Right ventricle myocardium inferior (tissue), 1 donor: ENCODE measurements at regions of chr2 and their contacts with region 1.

Region 1: GRCh38 chr2:42095923-42096408 is 48.1 kb downstream of the PKDCC start:
- DNase-seq: peak; percentile 89
- ATAC-seq: peak; percentile 36

Region 2: DNA sequence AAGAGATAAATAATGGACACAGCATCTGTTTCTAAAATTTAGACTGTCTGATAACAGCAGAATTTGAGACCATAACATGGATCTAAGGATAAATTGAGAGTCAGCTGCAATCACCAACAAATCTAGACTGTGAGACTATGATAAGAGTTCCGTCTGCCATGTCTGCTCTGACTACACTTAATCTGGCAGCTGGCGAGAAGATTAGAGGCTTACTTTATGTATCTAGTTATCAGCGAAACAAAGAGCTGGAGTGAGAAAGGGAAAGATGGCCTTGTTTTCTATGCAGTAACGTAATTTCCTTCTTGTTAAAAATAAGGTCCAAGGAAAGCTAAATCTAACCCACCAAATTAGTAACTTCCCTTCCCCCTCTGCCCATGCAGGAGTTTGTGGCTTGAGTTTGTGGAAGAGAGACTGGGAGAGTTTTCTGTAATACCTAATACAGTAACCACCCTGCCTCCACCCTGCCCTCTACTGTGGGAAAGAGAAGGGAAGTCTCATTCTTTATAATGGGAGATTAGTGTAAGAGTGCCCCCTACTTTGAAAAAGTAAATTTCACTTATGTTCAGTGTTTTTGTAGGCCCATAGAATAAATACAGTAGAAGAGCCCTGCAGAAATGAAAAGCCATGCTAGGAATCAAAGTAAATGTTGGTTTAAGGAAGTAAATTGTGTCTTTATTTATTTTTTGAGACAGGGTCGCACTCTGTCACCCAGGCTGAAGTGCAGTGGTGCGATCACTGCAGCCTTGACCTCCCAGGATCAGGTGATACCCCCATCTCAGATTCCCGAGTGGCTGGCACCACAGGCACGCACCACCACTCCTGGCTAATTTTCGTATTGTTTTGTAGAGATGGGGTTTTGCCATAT is 100.7 kb after region 1 on chr2:
- intact Hi-C with region 1: loop called (anchors 2 kb)
- DNase-seq: peak; percentile 45
- ATAC-seq: peak; percentile 59

Region 3: GRCh38 chr2:42238644-42239288 is 142.8 kb after region 1 on chr2:
- intact Hi-C with region 1: loop called (anchors 1 kb)
- DNase-seq: peak; percentile 60
- ATAC-seq: peak; percentile 89

Region 4: DNA sequence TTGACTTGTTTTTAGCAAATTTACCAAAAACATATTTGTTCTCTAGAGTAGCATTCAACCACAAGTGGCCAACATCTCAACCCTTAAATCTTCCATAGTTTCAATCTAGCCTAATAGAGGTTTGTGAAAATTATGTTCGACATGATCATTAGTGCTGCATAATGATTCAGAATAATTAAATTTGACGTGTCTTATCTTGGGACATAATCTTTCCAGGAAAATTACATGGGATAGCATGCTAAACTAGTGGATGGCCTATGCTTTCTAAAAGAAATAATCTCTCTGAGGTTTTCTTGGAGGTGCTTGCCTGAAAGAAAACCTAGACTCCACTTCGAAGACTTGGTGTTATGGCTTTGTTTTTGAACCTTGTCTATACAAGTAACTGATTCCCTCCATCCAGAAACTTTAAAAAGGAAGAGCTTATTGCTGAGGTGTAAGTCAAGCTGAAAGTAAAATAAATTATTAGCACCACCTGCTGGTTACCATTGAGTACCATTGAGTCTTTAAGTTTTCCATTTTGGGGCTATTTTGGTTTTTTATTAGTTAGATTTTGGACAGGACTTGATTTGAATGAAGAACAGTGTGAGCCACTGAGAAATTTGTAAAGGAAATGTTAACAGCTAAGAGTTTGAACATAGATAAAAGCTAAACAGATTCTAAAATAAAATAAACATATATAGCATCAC is 232.3 kb after region 1 on chr2:
- intact Hi-C with region 1: loop called (anchors 2 kb)
- DNase-seq: no peak
- ATAC-seq: no peak

Region 5: DNA sequence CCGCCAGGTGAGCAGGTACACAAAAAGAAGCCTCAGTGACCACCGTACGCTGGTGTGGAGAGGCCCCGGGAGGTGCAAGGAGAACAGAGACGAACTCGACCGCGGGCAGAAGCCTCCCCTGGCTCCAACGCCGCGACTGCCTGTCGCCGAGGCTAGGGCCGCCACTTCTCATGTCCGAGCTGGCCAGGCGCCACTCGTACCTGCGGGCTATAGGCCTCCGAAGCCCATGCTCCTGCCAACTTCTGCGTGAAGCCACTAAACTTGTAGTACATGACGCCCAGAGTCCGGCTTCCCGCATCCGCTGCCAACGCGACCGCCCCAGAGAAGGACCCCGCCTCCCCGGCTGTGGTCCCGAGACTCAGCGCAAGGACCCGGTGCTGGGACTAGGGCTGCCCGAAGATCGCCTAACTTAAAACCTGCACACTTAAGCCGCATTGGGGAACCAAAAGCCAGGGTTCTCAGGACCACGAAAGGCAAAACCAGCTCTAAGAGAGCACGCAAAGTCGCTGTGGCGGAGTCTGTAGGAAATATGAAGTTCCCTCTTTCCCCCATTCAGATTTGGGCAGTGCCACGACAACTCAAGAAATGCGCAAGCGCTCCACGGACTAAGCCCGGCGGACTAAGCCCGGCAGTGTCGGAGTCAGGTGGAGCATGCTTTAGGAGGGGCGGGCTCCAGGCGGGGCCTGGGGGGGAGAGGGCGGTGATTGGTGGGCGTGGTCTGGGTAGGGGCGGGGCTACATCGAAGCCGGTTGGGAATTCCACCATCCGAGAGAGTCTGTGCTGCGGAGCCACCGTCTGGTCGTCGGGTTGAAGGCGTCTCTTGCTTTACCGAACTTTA is 265.1 kb after region 1 on chr2 and contains the start of gene COX7A2L:
- intact Hi-C with region 1: loop called (anchors 2 kb)
- DNase-seq: peak; percentile 98
- ATAC-seq: peak; percentile 100
- total RNA-seq, gene COX7A2L: 94.4 TPM

Region 6: GRCh38 chr2:42386684-42387083 is 290.7 kb after region 1 on chr2:
- intact Hi-C with region 1: no loop called
- DNase-seq: no peak
- ATAC-seq: no peak